ENCODE measurements at regions of chr11 and their contacts with region 1.

Region 1: GRCh38 chr11:45964911-45965389 is 42.5 kb downstream of the LARGE2 start:
- DNase-seq: peak; percentile 7 to 86 (median 54)
- ATAC-seq: peak; percentile 98
- H3K4me3 ChIP-seq: no peak overlapping the region
- H3K4me3 Mint-ChIP-seq: no peak overlapping the region
- H3K27ac ChIP-seq: peak overlapping the region in 1 of 2 experiments; percentile 12
- H3K27ac Mint-ChIP-seq: no peak overlapping the region
- H3K4me1 ChIP-seq: no peaks in the 10 kb centered on the region
- H3K4me1 Mint-ChIP-seq: no peaks in the 10 kb centered on the region
- H3K27me3 ChIP-seq: no peaks in the 10 kb centered on the region
- H3K27me3 Mint-ChIP-seq: no peaks in the 10 kb centered on the region
- CTCF ChIP-seq: peak; percentile 95

Region 2: DNA sequence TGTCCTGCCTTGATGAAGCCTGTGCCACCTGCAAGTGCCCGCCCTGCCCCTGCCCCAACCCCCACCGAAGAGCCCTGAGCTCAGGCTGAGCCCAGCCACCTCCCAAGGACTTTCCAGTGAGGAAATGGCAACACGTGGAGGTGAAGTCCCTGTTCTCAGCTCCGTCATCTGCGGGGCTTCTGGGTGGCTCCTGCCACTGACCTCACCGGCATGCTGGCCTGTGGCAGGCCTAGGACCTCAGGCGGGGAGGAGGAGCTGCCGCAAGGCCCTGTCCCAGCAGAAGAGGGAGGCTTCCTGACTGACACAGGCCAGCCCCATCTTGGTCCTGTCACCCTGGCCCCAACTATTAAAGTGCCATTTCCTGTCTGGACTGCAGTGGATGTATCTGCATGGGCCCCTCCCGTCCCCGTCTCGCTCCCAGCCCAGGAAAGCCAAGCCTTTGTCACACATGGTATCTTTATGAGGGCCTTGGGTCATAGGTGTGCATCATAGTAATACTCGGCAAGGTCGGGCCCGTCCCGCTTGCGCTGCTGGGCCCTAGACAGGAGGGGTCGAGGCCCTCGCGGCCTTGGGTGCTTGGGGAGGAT is 58.8 kb before region 1 on chr11:
- CTCF ChIA-PET with region 1: no interaction called
- POLR2A ChIA-PET with region 1: no interaction called
- intact Hi-C with region 1: loop called in 1 of 2 experiments (anchors 2 kb)
- DNase-seq: peak in 2 of 9 experiments; percentile 32 to 48
- ATAC-seq: no peak
- H3K4me3 ChIP-seq: no peak overlapping the region
- H3K4me3 Mint-ChIP-seq: no peak overlapping the region
- H3K27ac ChIP-seq: no peak overlapping the region
- H3K27ac Mint-ChIP-seq: no peak overlapping the region
- H3K4me1 ChIP-seq: peaks cover 6% of the 10 kb centered on the region
- H3K4me1 Mint-ChIP-seq: peaks cover 9% of the 10 kb centered on the region
- H3K27me3 ChIP-seq: no peaks in the 10 kb centered on the region
- H3K27me3 Mint-ChIP-seq: no peaks in the 10 kb centered on the region
- CTCF ChIP-seq: no peak

Region 3: GRCh38 chr11:45949992-45950407 is 14.9 kb before region 1 on chr11:
- CTCF ChIA-PET with region 1: interaction called, 31 read pairs
- POLR2A ChIA-PET with region 1: no interaction called
- intact Hi-C with region 1: no loop called
- DNase-seq: no peak
- ATAC-seq: no peak
- H3K4me3 ChIP-seq: no peak overlapping the region
- H3K4me3 Mint-ChIP-seq: no peak overlapping the region
- H3K27ac ChIP-seq: no peak overlapping the region
- H3K27ac Mint-ChIP-seq: no peak overlapping the region
- H3K4me1 ChIP-seq: no peaks in the 10 kb centered on the region
- H3K4me1 Mint-ChIP-seq: no peaks in the 10 kb centered on the region
- H3K27me3 ChIP-seq: no peaks in the 10 kb centered on the region
- H3K27me3 Mint-ChIP-seq: no peaks in the 10 kb centered on the region
- CTCF ChIP-seq: no peak

Region 4: GRCh38 chr11:45993531-45994001 is 28.6 kb after region 1 on chr11:
- CTCF ChIA-PET with region 1: interaction called, 17 read pairs
- POLR2A ChIA-PET with region 1: no interaction called
- intact Hi-C with region 1: no loop called
- DNase-seq: no peak
- ATAC-seq: no peak
- H3K4me3 ChIP-seq: no peak overlapping the region
- H3K4me3 Mint-ChIP-seq: no peak overlapping the region
- H3K27ac ChIP-seq: no peak overlapping the region
- H3K27ac Mint-ChIP-seq: no peak overlapping the region
- H3K4me1 ChIP-seq: no peaks in the 10 kb centered on the region
- H3K4me1 Mint-ChIP-seq: peaks cover 9% of the 10 kb centered on the region
- H3K27me3 ChIP-seq: no peaks in the 10 kb centered on the region
- H3K27me3 Mint-ChIP-seq: no peaks in the 10 kb centered on the region
- CTCF ChIP-seq: no peak

Region 5: DNA sequence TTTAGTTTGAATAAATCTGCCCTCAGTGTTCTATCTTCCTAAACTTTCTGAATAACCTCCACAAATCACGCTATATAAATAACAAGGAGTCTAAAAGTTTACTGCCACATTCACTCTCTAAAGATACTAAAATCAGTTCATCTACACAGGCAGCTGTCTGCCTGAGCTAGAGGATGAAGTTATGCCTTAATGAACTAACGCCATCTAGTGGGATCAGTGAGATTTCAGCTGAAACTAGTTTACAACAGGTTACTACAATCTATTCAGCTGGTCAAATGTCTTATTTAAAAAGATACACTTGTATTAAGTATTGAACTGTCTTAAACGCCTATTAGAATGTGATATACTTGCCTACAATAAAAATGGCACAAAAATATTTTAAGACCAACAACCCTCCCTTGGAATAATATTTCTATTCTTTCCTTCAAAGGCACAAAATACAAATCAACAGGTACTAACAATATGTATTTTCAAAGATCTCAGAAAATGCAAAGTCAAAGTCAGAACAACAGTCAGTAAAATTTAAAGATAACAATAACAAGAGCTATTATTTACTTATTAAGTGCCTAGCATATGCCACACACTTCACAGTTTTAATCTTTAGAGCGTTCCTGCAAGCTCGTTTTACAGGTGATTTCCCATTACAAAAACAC is 41.6 kb after region 1 on chr11:
- CTCF ChIA-PET with region 1: interaction called, 54 read pairs
- POLR2A ChIA-PET with region 1: interaction called, 4 read pairs
- intact Hi-C with region 1: loop called (anchors 1 kb)
- DNase-seq: peak in 3 of 9 experiments; percentile 21 to 77 (median 68)
- ATAC-seq: peak; percentile 78
- H3K4me3 ChIP-seq: no peak overlapping the region
- H3K4me3 Mint-ChIP-seq: no peak overlapping the region
- H3K27ac ChIP-seq: no peak overlapping the region
- H3K27ac Mint-ChIP-seq: no peak overlapping the region
- H3K4me1 ChIP-seq: no peaks in the 10 kb centered on the region
- H3K4me1 Mint-ChIP-seq: peaks cover 2% of the 10 kb centered on the region
- H3K27me3 ChIP-seq: no peaks in the 10 kb centered on the region
- H3K27me3 Mint-ChIP-seq: no peaks in the 10 kb centered on the region
- CTCF ChIP-seq: peak; percentile 81

Region 6: GRCh38 chr11:46308631-46309419 is 343.9 kb after region 1 on chr11:
- CTCF ChIA-PET with region 1: interaction called, 21 read pairs
- POLR2A ChIA-PET with region 1: no interaction called
- intact Hi-C with region 1: loop called (anchors 1 to 2 kb)
- DNase-seq: peak; percentile 22 to 78 (median 65)
- ATAC-seq: peak; percentile 90
- H3K4me3 ChIP-seq: no peak overlapping the region
- H3K4me3 Mint-ChIP-seq: no peak overlapping the region
- H3K27ac ChIP-seq: no peak overlapping the region
- H3K27ac Mint-ChIP-seq: no peak overlapping the region
- H3K4me1 ChIP-seq: peaks cover 15% of the 10 kb centered on the region
- H3K4me1 Mint-ChIP-seq: peaks cover 11% of the 10 kb centered on the region
- H3K27me3 ChIP-seq: no peaks in the 10 kb centered on the region
- H3K27me3 Mint-ChIP-seq: no peaks in the 10 kb centered on the region
- CTCF ChIP-seq: peak; percentile 85